Natural killer cell (primary cell): ENCODE measurements at regions of chr4 and their contacts with region 1.

Region 1: GRCh38 chr4:54005475-54005874 is 58.9 kb downstream of the CHIC2 start:
- DNase-seq: no peak
- ATAC-seq: peak; percentile 59 to 86 (median 65)
- H3K4me3 ChIP-seq: no peak overlapping the region
- H3K4me3 Mint-ChIP-seq: no peak overlapping the region
- H3K27ac ChIP-seq: no peak overlapping the region
- H3K27ac Mint-ChIP-seq: peak overlapping the region; percentile 59 to 84
- H3K4me1 ChIP-seq: no peaks in the 10 kb centered on the region
- H3K4me1 Mint-ChIP-seq: peaks cover 29 to 31% of the 10 kb centered on the region in 2 donors
- H3K27me3 ChIP-seq: no peaks in the 10 kb centered on the region
- H3K27me3 Mint-ChIP-seq: no peaks in the 10 kb centered on the region
- CTCF ChIP-seq: no peak

Region 2: DNA sequence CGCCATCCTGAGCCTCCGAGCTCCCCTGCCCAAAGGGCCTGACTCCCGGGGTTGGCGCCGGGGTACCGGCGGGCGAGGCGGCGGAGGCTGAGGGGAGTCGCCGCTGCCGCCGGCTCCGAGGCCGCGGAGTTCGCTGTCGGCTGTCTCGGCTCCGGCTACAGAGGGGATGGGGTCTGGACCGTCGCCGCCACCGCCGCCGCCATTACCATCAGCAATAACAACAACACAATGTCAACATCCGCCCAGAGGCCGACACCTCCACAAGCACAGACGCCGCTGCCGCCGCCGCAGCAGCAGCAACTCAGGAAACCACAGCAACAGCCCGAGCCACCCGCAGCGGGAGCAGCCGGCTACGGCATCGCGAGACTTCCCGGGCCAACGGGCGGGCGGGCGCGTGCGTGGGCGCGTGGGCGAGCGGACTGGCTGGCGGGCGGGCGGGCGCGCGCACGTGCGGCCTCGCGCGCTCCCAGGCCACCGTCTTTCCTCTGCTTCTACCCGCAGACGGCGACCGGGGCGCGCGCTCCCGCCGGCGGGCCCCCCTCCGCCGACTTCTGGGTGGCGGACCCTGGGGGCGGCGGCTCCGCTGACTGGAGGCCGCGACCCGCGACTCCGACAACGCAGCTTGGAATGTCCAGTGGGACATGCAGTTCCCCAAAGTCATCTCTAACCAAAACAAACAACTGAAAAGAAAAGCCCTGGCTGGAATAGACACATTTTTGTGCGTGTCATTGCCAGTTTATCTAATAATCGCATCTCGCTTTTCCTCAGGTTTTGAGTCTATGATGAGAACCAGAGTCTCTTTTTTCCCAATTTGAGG is 59.0 kb after region 1 on chr4 and contains the start of gene CHIC2:
- intact Hi-C with region 1: loop called (anchors 1 kb)
- DNase-seq: peak; percentile 98 to 99
- ATAC-seq: peak; percentile 80 to 92 (median 90)
- H3K4me3 ChIP-seq: peak within 1 kb of the TSS; percentile 76
- H3K4me3 Mint-ChIP-seq: peak within 1 kb of the TSS; percentile 95
- H3K27ac ChIP-seq: peak within 1 kb of the TSS; percentile 88
- H3K27ac Mint-ChIP-seq: peak within 1 kb of the TSS; percentile 96 to 97
- H3K4me1 ChIP-seq: no peaks in the 10 kb centered on the region
- H3K4me1 Mint-ChIP-seq: peaks cover 51 to 53% of the 10 kb centered on the region in 2 donors
- H3K27me3 ChIP-seq: no peaks in the 10 kb centered on the region
- H3K27me3 Mint-ChIP-seq: no peaks in the 10 kb centered on the region
- CTCF ChIP-seq: no peak
- total RNA-seq, gene CHIC2: 62.0 to 85.0 (median 79.7) TPM